ENCODE measurements at regions of chr21 and their contacts with region 1.

Region 1: DNA sequence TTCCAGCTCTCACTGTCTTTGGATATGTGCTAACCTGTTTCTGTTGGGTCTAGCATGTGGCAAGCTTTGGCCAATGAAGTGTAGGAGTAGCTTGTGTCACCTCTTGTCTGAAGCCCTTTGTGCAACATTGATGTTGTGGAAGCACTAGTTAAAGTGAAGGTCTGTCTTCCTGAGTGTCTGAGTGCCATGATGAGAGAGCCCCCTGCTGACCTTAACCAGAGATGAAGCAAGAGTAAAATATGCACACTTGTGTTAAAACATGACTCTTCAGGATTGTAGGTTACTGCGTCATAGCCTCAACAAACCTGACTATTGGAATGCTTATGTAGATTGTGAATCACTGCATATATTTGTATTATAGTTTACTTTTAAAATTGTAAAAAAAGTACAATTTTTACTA is 103.7 kb downstream of the NCAM2 start:
- DNase-seq: no peak
- H3K4me3 ChIP-seq: no peak overlapping the region
- H3K4me3 Mint-ChIP-seq: no peak overlapping the region
- H3K27ac ChIP-seq: no peak overlapping the region
- H3K27ac Mint-ChIP-seq: no peak overlapping the region
- H3K4me1 ChIP-seq: no peaks in the 10 kb centered on the region
- H3K4me1 Mint-ChIP-seq: no peaks in the 10 kb centered on the region
- H3K27me3 ChIP-seq: no peaks in the 10 kb centered on the region
- H3K27me3 Mint-ChIP-seq: no peaks in the 10 kb centered on the region

Region 2: GRCh38 chr21:20802631-20803260 is 299.2 kb before region 1 on chr21:
- CTCF ChIA-PET with region 1: no interaction called
- POLR2A ChIA-PET with region 1: no interaction called
- intact Hi-C with region 1: no loop called
- DNase-seq: no peak
- H3K4me3 ChIP-seq: no peak overlapping the region
- H3K4me3 Mint-ChIP-seq: peak overlapping the region in 1 of 8 donors; percentile 41
- H3K27ac ChIP-seq: no peak overlapping the region
- H3K27ac Mint-ChIP-seq: peak overlapping the region in 1 of 7 donors; percentile 69
- H3K4me1 ChIP-seq: no peaks in the 10 kb centered on the region
- H3K4me1 Mint-ChIP-seq: no peaks in the 10 kb centered on the region
- H3K27me3 ChIP-seq: no peaks in the 10 kb centered on the region
- H3K27me3 Mint-ChIP-seq: no peaks in the 10 kb centered on the region

Region 3: GRCh38 chr21:20999659-21000058 is 102.3 kb before region 1 on chr21:
- CTCF ChIA-PET with region 1: no interaction called
- POLR2A ChIA-PET with region 1: no interaction called
- intact Hi-C with region 1: loop called (anchors 5 kb)
- DNase-seq: peak in 3 of 5 donors; percentile 17 to 36 (median 29)
- H3K4me3 ChIP-seq: no peak overlapping the region
- H3K4me3 Mint-ChIP-seq: peak overlapping the region in 2 of 8 donors; percentile 20 to 38
- H3K27ac ChIP-seq: no peak overlapping the region
- H3K27ac Mint-ChIP-seq: no peak overlapping the region
- H3K4me1 ChIP-seq: peaks cover 7% of the 10 kb centered on the region
- H3K4me1 Mint-ChIP-seq: peaks cover 6 to 16% (median 9%) of the 10 kb centered on the region in 4 donors
- H3K27me3 ChIP-seq: no peaks in the 10 kb centered on the region
- H3K27me3 Mint-ChIP-seq: peaks cover 8 to 11% of the 10 kb centered on the region in 2 donors